Naive thymus-derived CD4-positive, alpha-beta T cell (primary cell): ENCODE measurements at regions of chr21 and their contacts with region 1.

Region 1: GRCh38 chr21:42513985-42514882 is 582 bp downstream of the SLC37A1 start:
- DNase-seq: peak in 8 of 9 donors; percentile 42 to 76 (median 54)
- ATAC-seq: peak; percentile 83
- H3K4me3 ChIP-seq: peak overlapping the region; percentile 82
- H3K4me3 Mint-ChIP-seq: peak overlapping the region; percentile 76 to 97 (median 89)
- H3K27ac ChIP-seq: peak overlapping the region; percentile 87
- H3K27ac Mint-ChIP-seq: peak overlapping the region; percentile 58 to 88 (median 84)
- H3K4me1 ChIP-seq: peaks cover 18 to 20% of the 10 kb centered on the region in 2 donors
- H3K4me1 Mint-ChIP-seq: peaks cover 22 to 45% (median 38%) of the 10 kb centered on the region in 7 donors
- H3K27me3 ChIP-seq: no peaks in the 10 kb centered on the region
- H3K27me3 Mint-ChIP-seq: peaks cover 0 to 19% (median 0%) of the 10 kb centered on the region in 5 donors

Region 2: DNA sequence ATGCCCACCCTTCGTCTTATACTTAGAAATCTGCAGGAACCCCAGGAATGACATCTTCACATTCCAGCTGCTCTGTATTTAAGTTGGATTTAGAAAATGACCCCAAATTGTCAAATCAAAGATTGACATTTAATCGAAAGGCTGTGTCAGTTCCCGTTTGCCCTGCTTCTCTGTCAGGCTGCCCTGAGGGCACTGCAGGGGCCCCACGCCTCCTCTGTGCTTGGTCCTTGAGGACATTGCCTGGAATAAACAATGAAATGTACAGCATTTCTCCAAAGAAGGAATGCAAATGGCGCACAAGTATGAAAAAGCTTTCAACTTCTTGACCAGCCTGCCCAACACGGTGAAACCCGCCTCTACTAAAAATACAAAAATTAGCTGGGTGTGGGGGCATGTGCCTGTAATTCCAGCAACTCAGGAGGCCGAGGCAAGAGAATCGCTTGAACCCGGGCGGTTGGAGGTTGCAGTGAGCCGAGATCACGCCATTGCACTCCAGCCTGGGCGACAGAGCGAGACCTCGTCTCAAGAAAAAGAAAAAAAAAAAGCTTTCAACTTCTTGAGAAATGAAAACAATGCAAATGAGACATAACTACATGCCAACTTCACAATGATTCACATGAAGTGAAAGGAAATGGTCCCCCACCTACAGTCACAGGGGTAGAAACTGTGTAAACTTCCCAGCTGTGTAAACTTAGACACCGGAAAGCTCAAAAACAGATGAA is 121.4 kb before region 1 on chr21:
- CTCF ChIA-PET with region 1: no interaction called
- POLR2A ChIA-PET with region 1: no interaction called
- intact Hi-C with region 1: no loop called
- DNase-seq: peak in 7 of 9 donors; percentile 29 to 64 (median 54)
- ATAC-seq: peak; percentile 82
- H3K4me3 ChIP-seq: peak overlapping the region; percentile 5
- H3K4me3 Mint-ChIP-seq: peak overlapping the region; percentile 22 to 75 (median 64)
- H3K27ac ChIP-seq: peak overlapping the region; percentile 46
- H3K27ac Mint-ChIP-seq: peak overlapping the region; percentile 5 to 91 (median 83)
- H3K4me1 ChIP-seq: peaks cover 13 to 34% of the 10 kb centered on the region in 2 donors
- H3K4me1 Mint-ChIP-seq: peaks cover 23 to 84% (median 63%) of the 10 kb centered on the region in 7 donors
- H3K27me3 ChIP-seq: no peaks in the 10 kb centered on the region
- H3K27me3 Mint-ChIP-seq: peaks cover 0 to 4% (median 0%) of the 10 kb centered on the region in 5 donors

Region 3: GRCh38 chr21:42524349-42525151 is 10.3 kb after region 1 on chr21:
- CTCF ChIA-PET with region 1: no interaction called
- POLR2A ChIA-PET with region 1: interaction called, 13 read pairs
- intact Hi-C with region 1: loop called (anchors 1 kb)
- DNase-seq: peak in 3 of 9 donors; percentile 10 to 25 (median 20)
- ATAC-seq: peak; percentile 60
- H3K4me3 ChIP-seq: no peak overlapping the region
- H3K4me3 Mint-ChIP-seq: peak overlapping the region in 7 of 10 donors; percentile 20 to 52 (median 43)
- H3K27ac ChIP-seq: no peak overlapping the region
- H3K27ac Mint-ChIP-seq: peak overlapping the region in 8 of 9 donors; percentile 6 to 88 (median 56)
- H3K4me1 ChIP-seq: peaks cover 16 to 30% of the 10 kb centered on the region in 2 donors
- H3K4me1 Mint-ChIP-seq: peaks cover 39 to 64% (median 54%) of the 10 kb centered on the region in 7 donors
- H3K27me3 ChIP-seq: no peaks in the 10 kb centered on the region
- H3K27me3 Mint-ChIP-seq: no peaks in the 10 kb centered on the region